ENCODE measurements at regions of chr2 and their contacts with region 1.

Region 1: GRCh38 chr2:226799181-226799975 is at the start of gene IRS1:
- DNase-seq: peak; percentile 71
- ATAC-seq: peak; percentile 59
- H3K4me3 Mint-ChIP-seq: peak within 1 kb of the TSS; percentile 87
- H3K27ac Mint-ChIP-seq: peak within 1 kb of the TSS; percentile 87
- H3K4me1 Mint-ChIP-seq: peaks cover 53% of the 10 kb centered on the region
- H3K27me3 Mint-ChIP-seq: peaks cover 9% of the 10 kb centered on the region
- total RNA-seq, gene IRS1: 7.3 to 9.6 TPM

Region 2: DNA sequence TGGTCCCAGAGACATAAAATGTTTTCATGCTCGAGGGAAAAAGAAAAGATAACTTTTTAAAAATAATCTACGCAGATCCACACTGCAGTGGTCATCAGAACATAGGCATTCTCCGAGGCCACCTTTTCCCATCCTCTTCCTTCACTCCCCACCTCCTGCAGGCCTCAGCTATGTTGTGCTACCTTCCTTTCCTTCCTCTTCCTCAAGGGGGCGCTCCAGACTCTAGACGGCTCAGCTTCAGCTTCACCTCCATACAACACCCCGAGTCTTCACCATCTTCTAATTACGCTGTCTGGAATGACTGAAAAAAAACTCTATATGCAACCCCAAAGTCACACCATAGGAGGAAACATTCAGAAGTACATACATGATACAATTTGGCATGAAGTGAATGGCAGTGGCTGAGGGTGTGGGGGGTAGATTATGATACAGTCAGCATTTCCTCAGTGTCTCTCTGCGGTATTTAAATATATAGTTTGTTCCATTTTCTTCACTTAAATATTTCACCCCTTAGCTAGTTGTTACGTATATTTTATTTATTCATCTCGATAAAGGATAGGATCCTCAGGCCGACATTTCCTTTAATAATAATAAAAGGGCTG is 583.4 kb before region 1 on chr2:
- CTCF ChIA-PET with region 1: interaction called, 23 read pairs
- POLR2A ChIA-PET with region 1: no interaction called
- DNase-seq: peak; percentile 70
- ATAC-seq: peak; percentile 90
- H3K4me3 Mint-ChIP-seq: no peak overlapping the region
- H3K27ac Mint-ChIP-seq: no peak overlapping the region
- H3K4me1 Mint-ChIP-seq: no peaks in the 10 kb centered on the region
- H3K27me3 Mint-ChIP-seq: no peaks in the 10 kb centered on the region

Region 3: GRCh38 chr2:226772389-226773179 is 26.8 kb before region 1 on chr2:
- CTCF ChIA-PET with region 1: interaction called, 36 read pairs
- POLR2A ChIA-PET with region 1: no interaction called
- DNase-seq: no peak
- ATAC-seq: peak; percentile 87
- H3K4me3 Mint-ChIP-seq: peak overlapping the region; percentile 67
- H3K27ac Mint-ChIP-seq: peak overlapping the region; percentile 78
- H3K4me1 Mint-ChIP-seq: peaks cover 36% of the 10 kb centered on the region
- H3K27me3 Mint-ChIP-seq: no peaks in the 10 kb centered on the region

Region 4: DNA sequence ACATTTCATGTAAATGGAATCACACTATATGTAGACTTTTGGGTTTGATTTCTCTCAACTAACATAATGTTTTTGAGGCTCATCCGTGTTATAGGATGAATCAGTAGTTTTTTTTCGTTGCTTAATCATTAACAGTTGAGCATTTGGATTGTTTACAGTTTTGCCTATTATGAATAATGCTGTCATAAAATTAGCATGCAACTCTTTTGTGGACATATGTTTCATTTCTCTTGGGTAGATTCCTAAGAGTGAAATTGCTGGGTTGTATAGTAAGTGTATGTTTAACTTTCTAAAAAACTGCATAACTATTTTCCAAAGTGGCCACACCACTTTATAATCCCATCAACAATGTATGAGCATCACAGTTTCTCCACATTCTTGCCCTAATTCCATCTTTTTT is 28.8 kb after region 1 on chr2:
- CTCF ChIA-PET with region 1: interaction called, 13 read pairs
- POLR2A ChIA-PET with region 1: no interaction called
- DNase-seq: no peak
- ATAC-seq: no peak
- H3K4me3 Mint-ChIP-seq: no peak overlapping the region
- H3K27ac Mint-ChIP-seq: no peak overlapping the region
- H3K4me1 Mint-ChIP-seq: peaks cover 7% of the 10 kb centered on the region
- H3K27me3 Mint-ChIP-seq: no peaks in the 10 kb centered on the region

Region 5: GRCh38 chr2:226984750-226985582 is 185.6 kb after region 1 on chr2:
- CTCF ChIA-PET with region 1: interaction called, 29 read pairs
- POLR2A ChIA-PET with region 1: no interaction called
- DNase-seq: peak; percentile 64
- ATAC-seq: peak; percentile 95
- H3K4me3 Mint-ChIP-seq: no peak overlapping the region
- H3K27ac Mint-ChIP-seq: peak overlapping the region; percentile 76
- H3K4me1 Mint-ChIP-seq: peaks cover 35% of the 10 kb centered on the region
- H3K27me3 Mint-ChIP-seq: no peaks in the 10 kb centered on the region

Measured in activated CD8-positive, alpha-beta T cell treated with anti-CD3 and anti-CD28 coated beads, Interleukin-2, amount 10 ng/mL, durations not matched to agents 7 days and 5 days (primary cell).